Activated CD4-positive, alpha-beta T cell treated with anti-CD3 and anti-CD28 coated beads, Interleukin-2, amount 10 ng/mL, durations not matched to agents 24 days and 14 days (primary cell): ENCODE measurements at regions of chr1 and their contacts with region 1.

Region 1: DNA sequence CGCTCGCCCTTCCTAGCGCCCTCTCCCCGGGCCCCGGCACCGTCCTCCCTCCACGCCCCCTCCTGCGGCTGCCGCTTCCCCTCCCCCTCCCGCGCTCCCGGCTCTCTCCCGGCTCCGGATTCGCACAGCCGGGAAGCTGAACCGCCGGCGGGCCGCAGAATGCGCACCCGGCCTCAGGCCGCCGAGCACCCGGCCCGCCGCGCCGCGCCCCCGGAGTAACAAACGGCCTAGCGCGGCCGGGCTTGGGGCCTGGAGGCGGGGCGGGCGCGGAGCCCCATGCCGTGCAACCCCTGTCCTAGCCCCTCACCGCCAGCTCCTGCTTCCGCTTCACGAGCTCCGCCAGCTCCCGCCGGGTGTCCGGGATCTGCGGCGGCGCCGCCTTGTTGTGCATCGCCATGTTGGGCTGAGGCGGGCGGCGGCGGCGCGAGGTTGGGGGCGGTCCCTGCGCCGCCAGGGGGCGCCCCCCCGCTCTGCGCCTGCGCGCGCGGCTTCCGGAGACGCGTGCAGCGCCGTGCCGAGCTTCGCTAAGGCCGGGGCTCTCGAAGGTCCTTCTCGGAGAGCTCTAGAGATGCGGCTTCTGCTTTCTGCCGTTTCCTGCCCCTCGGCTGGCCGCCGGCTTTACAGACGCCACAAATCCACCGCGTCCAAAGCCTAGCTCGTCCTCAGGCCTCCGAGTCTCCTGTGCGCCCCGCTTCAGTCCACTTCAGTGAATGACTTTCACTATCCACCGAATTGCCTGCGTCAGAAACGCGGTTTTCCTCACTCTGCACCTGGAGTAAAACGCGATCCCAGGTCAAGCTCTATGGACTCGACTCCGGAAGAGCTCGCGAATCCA is at the start of gene MEAF6:
- DNase-seq: peak; percentile 96
- H3K4me3 Mint-ChIP-seq: peak within 1 kb of the TSS; percentile 98
- H3K27ac Mint-ChIP-seq: peak within 1 kb of the TSS; percentile 97
- H3K4me1 Mint-ChIP-seq: peaks cover 39% of the 10 kb centered on the region
- H3K27me3 Mint-ChIP-seq: no peaks in the 10 kb centered on the region
- total RNA-seq, gene MEAF6: 94.4 and 95.6 TPM in 2 replicates

Region 2: GRCh38 chr1:37553927-37554808 is 39.6 kb after region 1 on chr1 and contains the start of gene SNIP1:
- intact Hi-C with region 1: loop called (anchors 2 kb)
- DNase-seq: peak; percentile 97
- H3K4me3 Mint-ChIP-seq: peak within 1 kb of the TSS; percentile 98
- H3K27ac Mint-ChIP-seq: peak within 1 kb of the TSS; percentile 97
- H3K4me1 Mint-ChIP-seq: peaks cover 46% of the 10 kb centered on the region
- H3K27me3 Mint-ChIP-seq: no peaks in the 10 kb centered on the region
- total RNA-seq, gene SNIP1: 22.7 and 25.4 TPM in 2 replicates